Activated CD8-positive, alpha-beta memory T cell treated with anti-CD3 and anti-CD28 coated beads, Interleukin-2, amount 10 ng/mL, durations not matched to agents 7 days and 5 days (primary cell): ENCODE measurements at regions of chr9 and their contacts with region 1.

Region 1: GRCh38 chr9:22052376-22052945 is 43.4 kb upstream of the CDKN2B start:
- DNase-seq: peak; percentile 63
- ATAC-seq: peak; percentile 77
- H3K4me3 Mint-ChIP-seq: peak overlapping the region; percentile 11
- H3K27ac Mint-ChIP-seq: peak overlapping the region; percentile 76
- H3K4me1 Mint-ChIP-seq: peaks cover 47% of the 10 kb centered on the region
- H3K27me3 Mint-ChIP-seq: peaks cover 7% of the 10 kb centered on the region

Region 2: GRCh38 chr9:22068369-22068768 is 15.9 kb after region 1 on chr9:
- CTCF ChIA-PET with region 1: interaction called, 10 read pairs
- DNase-seq: no peak
- ATAC-seq: no peak
- H3K4me3 Mint-ChIP-seq: no peak overlapping the region
- H3K27ac Mint-ChIP-seq: no peak overlapping the region
- H3K4me1 Mint-ChIP-seq: peaks cover 61% of the 10 kb centered on the region
- H3K27me3 Mint-ChIP-seq: peaks cover 2% of the 10 kb centered on the region

Region 3: GRCh38 chr9:22079873-22080341 is 27.4 kb after region 1 on chr9:
- CTCF ChIA-PET with region 1: interaction called, 13 read pairs
- DNase-seq: peak; percentile 70
- ATAC-seq: peak; percentile 88
- H3K4me3 Mint-ChIP-seq: peak overlapping the region; percentile 6
- H3K27ac Mint-ChIP-seq: peak overlapping the region; percentile 67
- H3K4me1 Mint-ChIP-seq: peaks cover 48% of the 10 kb centered on the region
- H3K27me3 Mint-ChIP-seq: peaks cover 36% of the 10 kb centered on the region

Region 4: GRCh38 chr9:22119537-22120158 is 67.2 kb after region 1 on chr9:
- CTCF ChIA-PET with region 1: interaction called, 20 read pairs
- DNase-seq: peak; percentile 43
- ATAC-seq: peak; percentile 93
- H3K4me3 Mint-ChIP-seq: no peak overlapping the region
- H3K27ac Mint-ChIP-seq: no peak overlapping the region
- H3K4me1 Mint-ChIP-seq: peaks cover 13% of the 10 kb centered on the region
- H3K27me3 Mint-ChIP-seq: peaks cover 66% of the 10 kb centered on the region